Activated naive CD4-positive, alpha-beta T cell treated with anti-CD3 and anti-CD28 coated beads for 36 hours (primary cell): ENCODE measurements at regions of chr2 and their contacts with region 1.

Region 1: DNA sequence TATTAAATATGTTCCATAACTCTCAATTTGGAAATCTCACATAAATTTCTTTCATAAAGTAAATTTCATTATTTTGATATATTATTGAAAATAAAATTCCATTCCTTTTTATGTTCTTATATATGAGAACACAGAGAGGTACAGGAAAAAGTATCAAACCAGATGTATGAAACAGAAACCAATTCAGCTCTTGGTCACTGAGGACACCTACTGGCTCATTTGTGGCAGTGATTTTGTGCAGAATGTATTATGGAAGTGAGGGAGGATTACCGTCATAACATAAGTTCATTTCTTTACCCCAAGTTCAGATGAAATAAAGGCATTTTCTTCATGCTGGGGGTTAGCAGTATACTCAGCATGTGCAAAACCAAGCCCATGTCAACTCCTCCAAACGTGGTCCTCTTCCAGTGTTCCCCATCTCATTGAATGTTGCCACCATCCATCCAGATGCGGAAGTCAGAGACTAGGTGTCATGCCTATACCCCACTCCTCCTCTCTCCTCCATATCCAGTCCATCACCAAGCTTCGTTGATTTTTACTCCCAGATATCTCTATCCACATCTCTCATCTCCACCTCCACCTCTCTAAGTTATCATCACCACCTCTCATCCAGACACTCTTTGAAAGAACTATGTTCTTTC is 41.7 kb upstream of the MALL start:
- DNase-seq: peak; percentile 59
- H3K4me3 Mint-ChIP-seq: no peak overlapping the region
- H3K27ac Mint-ChIP-seq: no peak overlapping the region
- H3K4me1 Mint-ChIP-seq: peaks cover 36% of the 10 kb centered on the region
- H3K27me3 Mint-ChIP-seq: peaks cover 2% of the 10 kb centered on the region

Region 2: GRCh38 chr2:110120171-110121051 is 36.9 kb before region 1 on chr2:
- CTCF ChIA-PET with region 1: interaction called, 3 read pairs
- intact Hi-C with region 1: loop called (anchors 5 kb)
- DNase-seq: no peak
- H3K4me3 Mint-ChIP-seq: no peak overlapping the region
- H3K27ac Mint-ChIP-seq: no peak overlapping the region
- H3K4me1 Mint-ChIP-seq: no peaks in the 10 kb centered on the region
- H3K27me3 Mint-ChIP-seq: peaks cover 36% of the 10 kb centered on the region

Region 3: GRCh38 chr2:110167326-110168000 is 10.2 kb after region 1 on chr2:
- CTCF ChIA-PET with region 1: interaction called, 15 read pairs
- intact Hi-C with region 1: no loop called
- DNase-seq: no peak
- H3K4me3 Mint-ChIP-seq: no peak overlapping the region
- H3K27ac Mint-ChIP-seq: no peak overlapping the region
- H3K4me1 Mint-ChIP-seq: peaks cover 4% of the 10 kb centered on the region
- H3K27me3 Mint-ChIP-seq: peaks cover 10% of the 10 kb centered on the region

Region 4: DNA sequence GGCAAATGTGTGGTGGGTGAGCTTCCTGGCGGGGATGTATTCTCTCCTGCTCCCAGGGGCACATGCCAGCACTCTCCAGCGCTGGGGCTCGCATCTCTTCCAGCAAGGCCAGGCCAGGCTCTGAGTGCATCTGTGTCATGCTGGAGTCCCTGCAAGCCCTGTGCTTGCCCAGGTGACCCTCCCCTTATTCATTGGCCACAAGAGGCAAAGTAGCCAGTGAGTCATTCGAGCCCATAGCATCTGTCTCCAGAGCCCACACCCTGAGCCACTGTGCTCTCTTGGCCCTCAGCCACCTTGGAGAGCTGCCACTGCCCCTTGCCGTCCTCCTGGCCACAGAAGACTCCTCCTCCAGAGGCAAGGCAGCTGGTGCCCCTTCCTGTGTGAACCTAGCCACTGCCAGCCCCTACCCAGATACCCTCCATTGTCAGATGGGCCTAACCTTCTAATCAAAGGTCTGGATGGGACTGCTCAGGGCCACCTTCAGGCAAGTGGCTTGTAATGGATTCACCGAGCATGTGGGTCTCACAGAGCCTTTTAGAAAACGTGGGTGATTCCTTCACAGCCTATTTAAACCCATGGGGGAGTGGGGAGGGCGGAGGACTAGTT is 712.3 kb after region 1 on chr2:
- CTCF ChIA-PET with region 1: no interaction called
- intact Hi-C with region 1: no loop called
- DNase-seq: no peak
- H3K4me3 Mint-ChIP-seq: no peak overlapping the region
- H3K27ac Mint-ChIP-seq: no peak overlapping the region
- H3K4me1 Mint-ChIP-seq: peaks cover 34% of the 10 kb centered on the region
- H3K27me3 Mint-ChIP-seq: peaks cover 40% of the 10 kb centered on the region